Activated naive CD4-positive, alpha-beta T cell treated with anti-CD3 and anti-CD28 coated beads for 36 hours (primary cell): ENCODE measurements at regions of chr18 and their contacts with region 1.

Region 1: DNA sequence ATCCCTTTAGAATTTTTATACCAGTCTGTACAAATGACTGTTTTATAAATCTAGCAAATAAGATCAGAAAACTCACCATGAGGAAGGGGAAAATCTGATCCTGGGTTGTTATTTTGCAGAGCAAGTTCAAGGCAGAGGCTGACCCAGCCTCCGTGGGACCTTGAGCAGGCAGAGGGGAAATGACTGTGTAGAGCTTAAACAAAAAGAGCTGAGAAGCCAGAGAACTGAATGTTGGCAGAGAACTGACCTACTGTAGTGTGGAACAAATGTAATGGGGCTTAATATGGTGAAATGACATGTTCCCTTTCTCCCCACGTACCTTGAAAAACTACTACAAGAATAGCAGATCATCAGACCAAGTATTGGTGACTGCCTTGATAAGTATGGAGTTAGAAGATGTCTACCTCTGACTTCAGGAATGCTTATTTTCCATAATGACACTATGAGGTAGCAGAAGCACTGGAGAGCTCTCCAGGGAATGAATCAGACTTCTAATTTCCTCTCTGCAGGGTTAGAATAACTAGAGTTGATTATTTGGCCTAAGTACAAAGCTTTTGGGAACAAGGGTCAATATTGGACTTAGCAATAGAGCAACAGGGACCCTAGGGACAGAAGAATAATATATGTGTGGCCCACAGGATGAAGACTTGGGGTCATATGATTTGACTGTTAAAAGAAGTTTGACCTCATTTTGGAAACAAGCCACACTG is 304.4 kb downstream of the CCDC178 start:
- DNase-seq: no peak
- H3K4me3 Mint-ChIP-seq: no peak overlapping the region
- H3K27ac Mint-ChIP-seq: no peak overlapping the region
- H3K4me1 Mint-ChIP-seq: no peaks in the 10 kb centered on the region
- H3K27me3 Mint-ChIP-seq: no peaks in the 10 kb centered on the region

Region 2: DNA sequence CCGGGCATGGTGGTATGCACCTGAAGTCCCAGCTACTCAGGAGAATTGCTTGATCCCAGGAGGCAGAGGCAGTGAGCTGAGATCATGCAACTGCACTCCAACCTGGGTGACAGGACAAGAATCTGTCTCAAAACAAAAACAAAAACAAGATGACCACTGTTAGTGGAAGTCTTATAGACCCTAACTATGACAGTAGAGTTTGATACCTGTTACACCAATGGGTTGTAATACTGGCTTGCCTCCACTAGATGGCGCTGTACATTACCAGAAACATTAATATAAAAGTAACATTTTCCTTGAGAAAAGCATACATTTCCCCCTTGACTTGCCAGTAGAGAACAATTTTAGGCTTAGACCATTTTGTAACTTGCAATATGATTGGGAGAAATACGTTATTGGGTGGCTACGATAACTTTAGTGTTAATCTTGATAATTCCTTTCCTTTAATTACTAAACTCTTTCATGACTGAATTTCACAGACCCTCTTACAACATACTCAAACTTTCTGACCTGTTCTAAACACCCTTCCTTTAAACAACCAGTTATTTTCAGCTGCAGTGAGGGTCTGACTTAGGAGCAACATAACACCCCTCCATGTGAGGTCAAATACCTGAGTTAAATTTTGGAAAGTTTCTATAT is 1394.9 kb before region 1 on chr18:
- CTCF ChIA-PET with region 1: no interaction called
- intact Hi-C with region 1: no loop called
- DNase-seq: peak; percentile 78
- H3K4me3 Mint-ChIP-seq: no peak overlapping the region
- H3K27ac Mint-ChIP-seq: no peak overlapping the region
- H3K4me1 Mint-ChIP-seq: no peaks in the 10 kb centered on the region
- H3K27me3 Mint-ChIP-seq: no peaks in the 10 kb centered on the region

Region 3: DNA sequence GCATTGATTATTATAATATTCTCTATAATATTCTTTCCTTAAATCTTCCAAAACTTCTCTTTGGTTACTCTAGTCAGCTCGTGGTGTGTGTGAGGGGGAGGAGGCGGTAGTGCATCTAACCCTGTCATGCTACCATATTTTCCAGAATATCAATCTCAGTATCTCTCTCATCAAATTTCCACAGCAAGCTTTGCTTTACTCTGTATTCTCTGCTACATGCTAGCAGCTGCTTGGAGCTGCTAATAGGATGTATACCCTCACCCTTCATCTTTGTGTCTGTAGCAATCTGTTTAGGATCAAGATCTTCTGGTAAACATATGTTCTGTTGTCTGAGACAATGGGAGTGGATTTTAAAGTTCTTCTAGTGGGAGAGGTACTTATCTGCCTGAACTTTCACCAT is 59.5 kb before region 1 on chr18:
- CTCF ChIA-PET with region 1: no interaction called
- intact Hi-C with region 1: loop called (anchors 10 kb)
- DNase-seq: no peak
- H3K4me3 Mint-ChIP-seq: no peak overlapping the region
- H3K27ac Mint-ChIP-seq: no peak overlapping the region
- H3K4me1 Mint-ChIP-seq: no peaks in the 10 kb centered on the region
- H3K27me3 Mint-ChIP-seq: no peaks in the 10 kb centered on the region